Left cardiac atrium (tissue), 4 donors: ENCODE measurements at regions of chr5 and their contacts with region 1.

Region 1: GRCh38 chr5:142145106-142145900 is 36.7 kb downstream of the NDFIP1 start:
- DNase-seq: peak; percentile 68
- ATAC-seq: peak; percentile 87 to 90

Region 2: DNA sequence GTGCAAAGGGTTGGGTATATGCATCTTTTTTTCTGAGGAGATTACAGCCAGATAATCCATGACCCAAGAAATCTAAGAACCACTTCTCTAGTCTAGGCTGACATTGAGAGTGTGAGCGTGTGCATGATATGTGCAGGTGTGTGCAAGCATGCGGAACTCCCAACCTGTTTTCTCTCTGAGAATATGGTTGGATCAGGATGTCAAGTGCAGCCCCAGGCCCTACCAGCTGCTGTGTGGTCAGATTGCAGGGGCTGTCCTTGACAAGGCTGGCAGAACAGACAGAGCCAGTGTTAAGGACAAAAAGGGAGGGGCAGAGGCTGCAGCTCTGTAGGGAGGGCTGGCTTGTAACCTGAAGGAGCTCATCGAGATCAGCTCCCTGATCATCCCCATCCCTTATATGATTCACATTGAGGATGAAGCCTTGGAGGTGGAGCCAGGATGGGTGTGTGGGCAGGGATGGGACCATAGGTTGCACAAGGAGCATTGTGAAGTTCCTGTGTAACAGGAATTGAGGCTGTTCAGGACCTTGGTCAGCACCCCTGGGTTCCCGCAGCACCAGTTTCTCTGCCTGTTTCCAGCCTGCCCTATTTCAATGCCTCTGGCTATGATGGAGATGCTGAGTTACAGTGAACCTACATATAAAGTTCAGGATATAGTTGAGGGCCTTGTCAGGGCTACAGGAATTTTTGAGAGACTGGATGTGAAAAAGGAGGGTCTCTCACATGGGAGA is 410.6 kb before region 1 on chr5:
- intact Hi-C with region 1: no loop called
- DNase-seq: peak; percentile 55
- ATAC-seq: peak; percentile 37 to 47

Region 3: DNA sequence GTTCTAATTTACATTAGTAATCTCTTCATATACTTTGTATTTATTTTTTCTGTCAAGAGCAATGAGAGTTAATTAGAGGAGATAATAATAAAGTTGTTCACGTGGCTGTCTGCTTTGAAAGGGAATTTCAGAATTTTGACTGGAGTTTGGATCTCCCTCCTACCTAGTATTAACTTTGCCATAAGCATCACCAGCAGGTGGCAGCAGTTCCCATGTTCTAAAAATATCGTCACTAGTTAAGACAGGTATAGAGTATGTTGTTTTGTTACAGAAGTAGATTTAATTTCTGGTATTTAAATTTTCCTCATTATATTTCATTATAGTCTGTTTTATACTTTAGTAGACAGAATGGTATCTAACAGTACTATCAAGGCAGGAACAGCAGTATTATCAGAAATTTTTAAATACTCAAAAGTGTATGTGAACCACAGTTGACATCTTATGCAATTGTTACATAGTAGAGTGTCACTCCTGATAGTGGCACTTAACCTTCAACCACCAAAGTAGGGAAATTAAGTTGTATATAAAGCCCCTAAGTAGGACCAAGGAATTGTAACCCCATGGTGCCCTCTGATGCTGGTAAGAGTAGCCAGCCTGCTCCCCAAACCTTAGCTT is 152.8 kb before region 1 on chr5:
- intact Hi-C with region 1: loop called (anchors 2 to 5 kb)
- DNase-seq: peak; percentile 75
- ATAC-seq: peak; percentile 71 to 74

Region 4: GRCh38 chr5:142356716-142357473 is 211.6 kb after region 1 on chr5:
- intact Hi-C with region 1: no loop called
- DNase-seq: peak; percentile 91
- ATAC-seq: peak; percentile 87 to 92